ENCODE measurements at regions of chr7 and their contacts with region 1.

Region 1: DNA sequence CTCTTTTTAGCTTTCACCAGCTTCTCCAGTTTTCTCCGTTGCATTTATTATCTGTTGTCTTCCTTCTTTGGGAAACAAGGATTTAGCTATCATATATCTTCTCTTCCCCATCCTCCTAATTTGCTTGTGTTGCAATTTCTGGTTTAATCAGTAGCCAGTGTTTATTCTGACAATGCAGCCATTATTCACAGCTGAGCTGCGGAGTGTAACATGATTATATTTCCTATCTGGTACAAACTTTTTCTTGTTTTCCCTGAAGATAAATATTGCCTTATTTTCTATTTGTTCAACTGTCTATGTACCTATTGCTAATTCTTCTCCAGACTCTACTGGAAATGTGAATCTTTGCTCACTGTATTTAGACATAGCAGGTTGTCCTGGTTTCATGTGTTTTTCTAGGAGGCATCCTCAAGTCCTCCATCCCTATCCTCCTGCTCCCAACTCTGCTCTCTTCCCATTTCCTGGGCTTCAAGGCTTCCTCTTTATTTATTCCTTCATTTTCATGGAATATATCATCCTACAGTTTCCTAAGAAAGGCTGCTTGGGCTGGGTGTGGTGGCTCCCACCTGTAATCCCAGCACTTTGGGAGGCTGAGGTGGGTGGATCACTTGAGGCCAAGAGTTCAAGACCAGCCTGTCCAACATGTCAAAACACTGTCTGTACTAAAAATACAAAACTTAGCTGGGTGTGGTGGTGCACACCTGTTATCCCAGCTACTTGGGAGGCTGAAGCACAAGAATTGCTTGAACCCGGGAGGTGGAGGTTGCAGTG is 72.4 kb upstream of the KDM7A start:
- DNase-seq: no peak
- H3K4me3 ChIP-seq: no peak overlapping the region
- H3K4me3 Mint-ChIP-seq: no peak overlapping the region
- H3K27ac ChIP-seq: no peak overlapping the region
- H3K27ac Mint-ChIP-seq: peak overlapping the region in 3 of 7 donors; percentile 21 to 68 (median 34)
- H3K4me1 ChIP-seq: peaks cover 53 to 59% of the 10 kb centered on the region in 2 donors
- H3K4me1 Mint-ChIP-seq: peaks cover 53% of the 10 kb centered on the region
- H3K27me3 ChIP-seq: no peaks in the 10 kb centered on the region
- H3K27me3 Mint-ChIP-seq: peaks cover 0 to 5% (median 0%) of the 10 kb centered on the region in 3 donors
- CTCF ChIP-seq: no peak

Region 2: GRCh38 chr7:140230861-140231770 is 18.1 kb before region 1 on chr7:
- intact Hi-C with region 1: loop called in 1 of 2 experiments (anchors 1 kb)
- DNase-seq: peak; percentile 47 to 80 (median 54)
- H3K4me3 ChIP-seq: peak overlapping the region; percentile 49 to 82 (median 68)
- H3K4me3 Mint-ChIP-seq: peak overlapping the region; percentile 95 to 98
- H3K27ac ChIP-seq: peak overlapping the region; percentile 91 to 92
- H3K27ac Mint-ChIP-seq: peak overlapping the region; percentile 93 to 99 (median 96)
- H3K4me1 ChIP-seq: peaks cover 49 to 67% of the 10 kb centered on the region in 2 donors
- H3K4me1 Mint-ChIP-seq: peaks cover 42% of the 10 kb centered on the region
- H3K27me3 ChIP-seq: peaks cover 0 to 14% of the 10 kb centered on the region in 2 donors
- H3K27me3 Mint-ChIP-seq: peaks cover 5 to 21% (median 18%) of the 10 kb centered on the region in 3 donors
- CTCF ChIP-seq: no peak

Region 3: GRCh38 chr7:140304191-140304799 is 55.1 kb after region 1 on chr7:
- intact Hi-C with region 1: loop called in 1 of 2 experiments (anchors 5 kb)
- DNase-seq: peak in 2 of 3 donors; percentile 45 to 67
- H3K4me3 ChIP-seq: peak overlapping the region in 1 of 3 experiments; percentile 10
- H3K4me3 Mint-ChIP-seq: no peak overlapping the region
- H3K27ac ChIP-seq: peak overlapping the region; percentile 51 to 84
- H3K27ac Mint-ChIP-seq: peak overlapping the region; percentile 82 to 97 (median 93)
- H3K4me1 ChIP-seq: peaks cover 49 to 63% of the 10 kb centered on the region in 2 donors
- H3K4me1 Mint-ChIP-seq: peaks cover 73% of the 10 kb centered on the region
- H3K27me3 ChIP-seq: no peaks in the 10 kb centered on the region
- H3K27me3 Mint-ChIP-seq: peaks cover 0 to 3% (median 1%) of the 10 kb centered on the region in 3 donors
- CTCF ChIP-seq: no peak

Region 4: DNA sequence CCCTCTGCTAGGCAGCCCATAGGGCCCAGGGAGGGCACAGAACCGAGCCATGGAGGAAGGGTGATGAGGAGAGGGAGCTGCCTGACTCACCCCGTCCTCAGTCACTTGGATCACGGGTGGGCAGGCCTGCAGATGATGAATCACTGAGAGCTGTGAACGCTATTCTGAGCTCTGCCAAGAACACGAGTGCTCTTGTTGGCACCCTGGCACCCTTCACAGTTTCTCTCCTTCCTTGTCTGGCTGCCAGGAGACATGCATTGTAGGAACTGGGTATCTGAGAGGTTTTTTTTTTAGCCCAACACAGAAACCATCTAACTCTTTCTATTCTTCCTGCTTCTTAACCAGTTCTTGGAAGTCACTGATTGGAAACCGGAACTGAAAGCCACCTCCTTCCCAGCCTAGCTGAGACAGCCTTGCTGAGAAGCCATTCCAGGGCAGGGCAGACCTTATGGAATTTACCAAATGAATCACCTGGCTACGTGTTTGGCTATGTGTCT is 67.0 kb after region 1 on chr7:
- intact Hi-C with region 1: loop called in 1 of 2 experiments (anchors 5 kb)
- DNase-seq: peak; percentile 93 to 98 (median 97)
- H3K4me3 ChIP-seq: peak overlapping the region; percentile 19 to 65 (median 32)
- H3K4me3 Mint-ChIP-seq: peak overlapping the region; percentile 56 to 88
- H3K27ac ChIP-seq: peak overlapping the region; percentile 92 to 95
- H3K27ac Mint-ChIP-seq: peak overlapping the region; percentile 90 to 97 (median 96)
- H3K4me1 ChIP-seq: peaks cover 85 to 95% of the 10 kb centered on the region in 2 donors
- H3K4me1 Mint-ChIP-seq: peaks cover 88% of the 10 kb centered on the region
- H3K27me3 ChIP-seq: no peaks in the 10 kb centered on the region
- H3K27me3 Mint-ChIP-seq: peaks cover 0 to 6% (median 0%) of the 10 kb centered on the region in 3 donors
- CTCF ChIP-seq: no peak